PC-3 (cell line): ENCODE measurements at regions of chr11 and their contacts with region 1.

Region 1: DNA sequence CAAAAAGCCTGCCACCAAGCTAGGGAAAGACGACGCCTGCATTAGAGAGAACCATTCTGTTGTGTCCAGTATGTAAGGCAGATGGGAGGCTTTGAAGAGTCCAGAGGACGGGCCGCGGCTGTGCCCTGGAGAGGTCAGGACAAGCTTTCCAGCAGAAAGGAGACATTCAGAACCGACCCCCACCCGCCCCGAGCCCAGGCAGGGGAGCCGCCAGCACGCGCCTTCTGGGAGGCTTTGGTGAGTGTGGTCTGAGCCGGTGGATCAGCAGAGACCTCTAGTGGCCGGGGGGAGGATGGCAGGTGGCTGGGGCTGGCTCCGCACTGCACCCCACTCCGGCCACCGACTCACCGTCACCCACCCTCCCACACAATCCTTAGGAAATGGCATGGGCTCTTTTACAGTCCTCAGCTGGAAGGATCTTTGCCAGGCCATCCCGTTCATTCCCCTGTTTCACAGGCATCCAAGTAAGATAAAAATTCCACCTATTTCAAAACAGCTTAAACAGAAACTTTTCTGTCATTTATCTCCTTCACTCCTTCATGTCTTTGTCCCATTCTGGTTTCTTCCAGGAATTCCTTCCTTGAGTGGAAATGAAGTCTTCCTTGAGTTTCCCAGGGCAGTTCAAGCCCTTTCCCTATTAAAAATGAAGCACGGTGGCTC is 91.2 kb downstream of the FEZ1 start:
- DNase-seq: peak; percentile 50
- ATAC-seq: peak; percentile 95
- H3K4me3 ChIP-seq: no peak overlapping the region
- H3K27ac ChIP-seq: no peak overlapping the region
- H3K4me1 ChIP-seq: no peaks in the 10 kb centered on the region
- H3K27me3 ChIP-seq: peaks cover 96% of the 10 kb centered on the region
- CTCF ChIP-seq: peak; percentile 88

Region 2: DNA sequence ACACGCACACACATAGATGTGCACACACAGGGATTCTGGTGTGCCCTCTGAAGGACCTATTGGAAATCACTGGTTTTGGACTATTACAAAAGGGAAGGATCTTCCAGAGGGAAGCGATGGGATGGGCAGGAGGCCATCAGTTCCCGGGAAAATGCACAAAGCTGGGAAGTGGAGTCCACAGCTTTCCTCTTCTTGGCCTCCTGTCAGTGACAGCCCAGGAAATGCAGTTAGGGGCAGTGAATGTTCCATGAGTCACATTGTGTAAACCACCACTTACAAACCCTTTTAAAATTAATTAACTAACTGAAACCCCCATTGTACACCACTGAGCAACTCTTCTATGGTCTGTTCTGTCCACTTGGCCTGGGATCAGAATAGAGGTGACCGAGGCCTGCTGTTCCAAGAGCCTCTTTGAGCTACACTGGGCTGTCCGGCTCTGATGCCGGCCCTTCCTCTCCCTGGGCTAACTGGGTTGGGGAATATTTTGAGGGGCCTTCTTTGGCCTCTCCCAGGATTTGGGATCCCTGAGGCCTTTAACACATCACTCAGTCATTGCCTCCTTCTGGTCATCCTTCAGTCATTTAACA is 46.6 kb before region 1 on chr11:
- CTCF ChIA-PET with region 1: no interaction called
- POLR2A ChIA-PET with region 1: no interaction called
- intact Hi-C with region 1: no loop called
- DNase-seq: peak; percentile 27
- ATAC-seq: peak; percentile 56
- H3K4me3 ChIP-seq: no peak overlapping the region
- H3K27ac ChIP-seq: no peak overlapping the region
- H3K4me1 ChIP-seq: no peaks in the 10 kb centered on the region
- H3K27me3 ChIP-seq: peaks cover 4% of the 10 kb centered on the region; the same call in 1 of the 2 replicates
- CTCF ChIP-seq: no peak

Region 3: DNA sequence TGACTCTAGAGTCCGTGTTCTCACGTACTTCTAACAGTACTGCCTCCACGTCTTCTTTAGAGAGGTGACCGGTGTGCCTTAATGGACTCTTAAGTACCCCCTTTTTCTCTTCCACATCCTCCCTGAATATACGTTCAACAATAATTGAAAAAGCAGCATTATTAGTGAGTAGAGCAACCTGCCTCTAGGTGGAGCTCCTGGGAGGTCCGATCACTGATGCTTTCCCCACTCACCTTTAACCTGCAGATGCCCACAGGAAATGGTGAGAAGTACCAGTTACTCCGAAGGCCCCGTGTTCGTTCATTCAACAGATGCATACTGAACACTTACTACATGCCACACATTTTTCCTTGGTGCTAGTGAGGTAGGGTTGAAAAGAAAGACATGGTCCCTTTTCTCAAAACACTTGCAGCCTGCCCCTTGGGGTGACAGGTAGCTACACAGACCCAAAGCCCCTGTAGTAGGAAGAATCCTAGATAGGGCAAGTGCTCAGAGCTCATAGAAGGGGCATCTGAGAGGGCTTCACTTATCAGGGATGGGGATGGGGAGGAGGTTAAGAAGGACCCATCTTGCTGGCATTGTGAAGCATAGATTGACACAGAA is 18.4 kb after region 1 on chr11:
- CTCF ChIA-PET with region 1: no interaction called
- POLR2A ChIA-PET with region 1: no interaction called
- intact Hi-C with region 1: no loop called
- DNase-seq: peak; percentile 52
- ATAC-seq: peak; percentile 58
- H3K4me3 ChIP-seq: no peak overlapping the region
- H3K27ac ChIP-seq: no peak overlapping the region
- H3K4me1 ChIP-seq: no peaks in the 10 kb centered on the region
- H3K27me3 ChIP-seq: peaks cover 76% of the 10 kb centered on the region
- CTCF ChIP-seq: peak; percentile 85

Region 4: GRCh38 chr11:125454047-125454446 is 49.1 kb after region 1 on chr11:
- CTCF ChIA-PET with region 1: no interaction called
- POLR2A ChIA-PET with region 1: interaction called, 10 read pairs
- intact Hi-C with region 1: no loop called
- DNase-seq: no peak
- ATAC-seq: no peak
- H3K4me3 ChIP-seq: no peak overlapping the region
- H3K27ac ChIP-seq: no peak overlapping the region
- H3K4me1 ChIP-seq: no peaks in the 10 kb centered on the region
- H3K27me3 ChIP-seq: peaks cover 5% of the 10 kb centered on the region; the same call in 1 of the 2 replicates
- CTCF ChIP-seq: no peak